ENCODE measurements at regions of chr14 and their contacts with region 1.

Region 1: DNA sequence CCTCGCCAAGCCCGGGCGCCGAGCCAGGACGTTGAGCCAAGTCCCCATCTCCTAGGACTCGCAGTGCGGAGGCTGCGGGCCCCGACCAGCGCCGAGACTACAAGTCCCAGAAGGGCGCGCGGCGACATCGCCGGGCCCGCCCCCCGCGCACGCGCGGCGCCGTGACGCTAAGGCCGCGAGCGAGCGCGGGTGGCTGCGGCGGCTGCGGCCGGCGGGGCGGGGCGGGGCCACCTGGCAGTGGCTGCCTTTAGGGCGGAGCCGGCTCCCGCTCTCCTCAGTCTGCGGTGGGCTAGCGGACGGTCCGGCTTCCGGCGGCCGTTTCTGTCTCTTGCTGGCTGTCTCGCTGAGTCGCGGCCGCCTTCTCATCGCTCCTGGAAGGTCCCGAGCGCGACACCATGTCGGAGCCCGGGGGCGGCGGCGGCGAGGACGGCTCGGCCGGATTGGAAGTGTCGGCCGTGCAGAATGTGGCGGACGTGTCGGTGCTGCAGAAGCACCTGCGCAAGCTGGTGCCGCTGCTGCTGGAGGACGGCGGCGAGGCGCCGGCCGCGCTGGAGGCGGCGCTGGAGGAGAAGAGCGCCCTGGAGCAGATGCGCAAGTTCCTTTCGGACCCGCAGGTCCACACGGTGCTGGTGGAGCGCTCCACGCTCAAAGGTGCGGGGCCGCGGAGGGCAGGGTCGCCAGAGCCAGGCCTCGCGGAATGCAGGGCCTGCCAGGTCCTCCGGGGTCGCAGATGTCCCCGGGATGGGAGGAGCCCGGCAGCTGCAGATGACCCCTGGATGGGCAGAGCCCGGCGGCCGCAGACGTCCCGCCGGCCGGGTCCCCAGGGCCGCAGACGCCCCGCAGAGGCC is at the start of gene DYNC1H1:
- DNase-seq: peak; percentile 91 to 97 (median 94)
- H3K4me3 ChIP-seq: peak within 1 kb of the TSS; percentile 75 to 100 (median 98)
- H3K27ac ChIP-seq: peak within 1 kb of the TSS; percentile 82 to 100 (median 97)
- H3K27me3 ChIP-seq: no peaks in the 10 kb centered on the region
- CTCF ChIP-seq: peak in 7 of 56 donors; percentile 5 to 20 (median 10)
- total RNA-seq, gene DYNC1H1: 740 to 1,310 (median 1,110) TPM

Region 2: DNA sequence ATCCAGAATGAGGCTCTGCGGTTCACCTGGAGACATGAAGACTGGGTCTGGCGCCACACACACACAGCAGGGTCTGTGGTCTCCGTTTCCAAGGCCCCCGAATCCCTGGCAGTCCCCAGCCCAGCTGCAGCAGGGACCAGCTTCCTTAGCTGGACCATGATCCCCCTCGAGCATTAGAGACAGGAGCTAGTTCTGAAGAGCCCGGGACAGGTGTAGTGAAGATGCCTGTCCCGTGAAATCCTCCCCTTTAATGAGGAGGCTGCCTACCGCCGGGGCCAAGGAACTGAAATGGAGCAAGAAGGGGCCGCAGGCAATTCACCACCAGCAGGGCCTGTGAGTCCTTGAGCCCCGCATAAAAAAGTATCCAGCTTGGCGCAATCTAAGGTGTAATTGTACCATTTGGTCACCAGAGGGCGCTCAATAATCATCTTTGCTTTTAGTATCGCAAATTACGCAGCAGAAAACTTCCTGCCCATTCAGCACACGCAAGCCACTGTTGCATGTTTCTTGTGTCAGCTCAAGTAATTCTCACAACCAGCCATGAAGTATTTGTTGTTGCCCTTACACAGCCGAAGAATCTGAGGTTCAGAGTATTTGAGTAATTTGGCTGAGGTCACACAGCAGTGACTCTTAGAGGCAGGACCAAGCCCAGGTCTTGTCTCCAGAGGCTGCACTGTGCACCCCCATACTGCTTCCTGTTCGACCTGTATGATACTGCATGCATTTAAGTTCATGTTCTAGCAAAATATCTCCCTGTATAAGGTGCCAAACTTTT is 257.3 kb before region 1 on chr14:
- intact Hi-C with region 1: loop called in 1 of 2 experiments (anchors 5 kb)
- DNase-seq: peak in 3 of 10 donors; percentile 27 to 61 (median 52)
- H3K4me3 ChIP-seq: peak overlapping the region in 16 of 59 donors; percentile 6 to 38 (median 22)
- H3K27ac ChIP-seq: peak overlapping the region in 11 of 59 donors; percentile 10 to 72 (median 45)
- H3K27me3 ChIP-seq: peaks cover 0 to 26% (median 7%) of the 10 kb centered on the region in 45 donors
- CTCF ChIP-seq: peak; percentile 71 to 98 (median 91)

Region 3: DNA sequence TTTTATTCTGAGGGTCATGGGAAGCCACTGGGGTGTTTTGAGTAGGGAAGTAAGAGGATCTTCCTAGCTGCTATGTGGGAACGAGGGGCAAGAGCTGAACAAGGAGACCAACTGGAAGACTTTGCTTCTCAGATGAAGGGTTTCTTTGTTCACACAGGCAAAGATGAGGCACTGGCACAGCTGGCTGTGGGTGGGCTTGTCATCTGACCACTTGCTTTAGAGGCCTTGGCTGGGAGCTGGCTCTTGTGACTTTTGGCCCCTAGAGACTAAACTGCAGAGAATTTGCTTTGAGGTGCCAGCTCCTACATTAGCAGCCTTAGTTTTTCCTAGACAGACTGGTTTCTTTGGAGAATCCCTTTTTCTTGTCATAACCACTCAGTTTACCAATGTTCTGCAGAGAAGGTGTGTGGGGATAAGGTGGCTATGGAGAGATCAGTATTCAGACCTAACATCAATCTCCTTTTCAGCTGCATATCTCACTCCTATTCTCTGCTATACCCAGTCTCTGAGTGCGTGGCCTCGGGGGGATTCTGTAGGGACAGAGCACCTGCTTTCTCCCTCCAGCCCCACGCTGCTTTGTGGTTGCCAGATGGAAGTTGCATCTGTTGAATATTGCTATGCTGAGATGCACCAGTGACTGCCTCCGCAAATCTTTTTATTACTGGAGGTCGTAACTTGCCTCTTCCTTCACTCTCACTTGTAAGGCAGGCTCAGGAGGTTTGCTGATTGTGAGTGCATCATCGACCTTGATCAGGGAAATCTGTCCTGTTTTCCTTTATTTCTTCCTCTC is 190.3 kb before region 1 on chr14:
- intact Hi-C with region 1: loop called in 1 of 2 experiments (anchors 5 kb)
- DNase-seq: peak in 6 of 10 donors; percentile 39 to 73 (median 64)
- H3K4me3 ChIP-seq: peak overlapping the region in 5 of 59 donors; percentile 1 to 17 (median 11)
- H3K27ac ChIP-seq: peak overlapping the region; percentile 27 to 90 (median 79)
- H3K27me3 ChIP-seq: no peaks in the 10 kb centered on the region
- CTCF ChIP-seq: no peak

Region 4: GRCh38 chr14:102046343-102047278 is 82.1 kb after region 1 on chr14:
- intact Hi-C with region 1: loop called in 1 of 2 experiments (anchors 5 kb)
- DNase-seq: peak; percentile 71 to 81 (median 76)
- H3K4me3 ChIP-seq: no peak overlapping the region
- H3K27ac ChIP-seq: peak overlapping the region in 50 of 59 donors; percentile 5 to 77 (median 56)
- H3K27me3 ChIP-seq: no peaks in the 10 kb centered on the region
- CTCF ChIP-seq: peak in 54 of 56 donors; percentile 21 to 79 (median 62)

Region 5: DNA sequence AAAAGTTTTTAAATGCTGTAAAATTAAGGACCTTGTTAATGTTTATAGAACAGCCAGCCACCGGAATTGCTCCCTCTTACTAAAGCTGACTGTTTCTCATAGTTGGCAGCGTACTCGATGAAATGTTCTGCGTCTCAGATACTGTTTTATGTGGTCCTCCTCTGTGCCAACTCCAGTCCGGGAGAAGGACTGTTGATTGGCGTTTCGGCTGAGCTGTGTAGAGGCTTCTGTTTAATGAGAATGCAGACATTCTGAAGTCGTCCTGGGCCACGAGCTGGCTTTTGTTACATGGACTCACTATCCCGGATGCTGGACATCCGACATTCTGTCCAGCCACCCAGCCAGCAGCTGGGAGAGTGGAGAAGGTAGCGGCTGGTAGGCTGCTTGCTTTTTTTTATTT is 250.6 kb after region 1 on chr14:
- intact Hi-C with region 1: loop called in 1 of 2 experiments (anchors 10 kb)
- DNase-seq: peak in 9 of 10 donors; percentile 35 to 84 (median 69)
- H3K4me3 ChIP-seq: peak overlapping the region in 25 of 59 donors; percentile 1 to 44 (median 23)
- H3K27ac ChIP-seq: peak overlapping the region; percentile 41 to 100 (median 81)
- H3K27me3 ChIP-seq: no peaks in the 10 kb centered on the region
- CTCF ChIP-seq: peak in 9 of 56 donors; percentile 4 to 31 (median 16)